Activated CD4-positive, alpha-beta memory T cell treated with anti-CD3 and anti-CD28 coated beads for 36 hours (primary cell): ENCODE measurements at regions of chr10 and their contacts with region 1.

Region 1: DNA sequence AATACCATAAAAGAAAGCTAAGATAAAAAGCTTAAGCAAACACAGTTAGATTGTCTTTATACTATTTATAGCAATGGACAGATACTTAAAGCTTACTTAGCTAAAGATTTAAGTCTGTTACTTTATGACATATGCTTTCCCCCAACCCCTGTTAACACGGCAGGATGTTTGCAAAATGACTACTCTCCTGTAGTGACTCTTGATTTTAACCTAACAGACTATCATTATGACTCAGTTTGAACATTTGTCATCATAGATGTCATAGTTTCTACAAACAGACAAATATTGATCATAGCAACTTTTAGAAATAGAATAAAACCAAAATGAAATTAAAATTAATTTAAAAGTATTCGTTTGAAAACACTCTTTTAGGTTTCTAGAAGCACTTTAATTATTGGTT is 7.8 kb upstream of the COMMD3 start:
- DNase-seq: peak; percentile 53
- H3K4me3 Mint-ChIP-seq: no peak overlapping the region
- H3K27ac Mint-ChIP-seq: no peak overlapping the region
- H3K4me1 Mint-ChIP-seq: peaks cover 8% of the 10 kb centered on the region
- H3K27me3 Mint-ChIP-seq: no peaks in the 10 kb centered on the region

Region 2: DNA sequence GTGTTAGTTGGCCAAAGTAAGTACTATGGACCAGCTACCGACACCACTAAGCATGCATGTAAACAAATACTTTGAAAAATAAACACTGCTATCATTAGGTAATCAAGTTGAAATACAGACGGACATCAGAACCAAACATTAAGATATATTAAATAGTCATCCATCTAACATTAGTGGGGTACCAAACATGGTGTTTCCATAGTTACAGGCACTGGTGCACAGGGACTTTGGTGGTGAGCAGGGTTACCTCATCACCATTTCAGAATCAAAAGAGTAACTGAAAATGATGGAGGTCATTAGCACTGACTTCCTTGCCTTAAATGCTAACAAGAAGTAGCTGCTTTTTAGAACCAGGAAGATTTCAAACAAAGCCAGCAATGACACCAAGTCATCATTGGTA is 114.4 kb before region 1 on chr10:
- CTCF ChIA-PET with region 1: no interaction called
- POLR2A ChIA-PET with region 1: no interaction called
- intact Hi-C with region 1: no loop called
- DNase-seq: no peak
- H3K4me3 Mint-ChIP-seq: no peak overlapping the region
- H3K27ac Mint-ChIP-seq: no peak overlapping the region
- H3K4me1 Mint-ChIP-seq: no peaks in the 10 kb centered on the region
- H3K27me3 Mint-ChIP-seq: peaks cover 3% of the 10 kb centered on the region

Region 3: DNA sequence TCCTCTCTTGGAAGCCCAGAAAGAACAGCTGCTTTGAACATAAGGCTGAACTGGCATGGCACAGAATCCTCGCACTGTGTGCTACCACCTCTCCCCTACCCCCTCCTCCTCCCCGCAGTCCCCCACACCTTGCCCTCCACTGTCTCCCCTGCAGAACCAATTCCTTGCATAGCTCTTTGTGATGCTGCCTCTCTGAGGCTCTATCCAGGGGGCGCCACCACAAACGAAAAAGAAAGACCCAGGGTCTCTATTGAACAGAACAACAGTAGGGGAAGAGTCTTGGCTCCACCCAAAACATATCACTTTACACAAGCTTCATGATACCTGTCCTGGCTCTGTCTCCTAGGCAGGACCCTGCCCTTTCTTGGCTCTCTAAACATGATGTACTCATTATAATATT is 64.4 kb before region 1 on chr10:
- CTCF ChIA-PET with region 1: no interaction called
- POLR2A ChIA-PET with region 1: no interaction called
- intact Hi-C with region 1: loop called (anchors 1 kb)
- DNase-seq: peak; percentile 17
- H3K4me3 Mint-ChIP-seq: no peak overlapping the region
- H3K27ac Mint-ChIP-seq: no peak overlapping the region
- H3K4me1 Mint-ChIP-seq: peaks cover 39% of the 10 kb centered on the region
- H3K27me3 Mint-ChIP-seq: peaks cover 4% of the 10 kb centered on the region

Region 4: DNA sequence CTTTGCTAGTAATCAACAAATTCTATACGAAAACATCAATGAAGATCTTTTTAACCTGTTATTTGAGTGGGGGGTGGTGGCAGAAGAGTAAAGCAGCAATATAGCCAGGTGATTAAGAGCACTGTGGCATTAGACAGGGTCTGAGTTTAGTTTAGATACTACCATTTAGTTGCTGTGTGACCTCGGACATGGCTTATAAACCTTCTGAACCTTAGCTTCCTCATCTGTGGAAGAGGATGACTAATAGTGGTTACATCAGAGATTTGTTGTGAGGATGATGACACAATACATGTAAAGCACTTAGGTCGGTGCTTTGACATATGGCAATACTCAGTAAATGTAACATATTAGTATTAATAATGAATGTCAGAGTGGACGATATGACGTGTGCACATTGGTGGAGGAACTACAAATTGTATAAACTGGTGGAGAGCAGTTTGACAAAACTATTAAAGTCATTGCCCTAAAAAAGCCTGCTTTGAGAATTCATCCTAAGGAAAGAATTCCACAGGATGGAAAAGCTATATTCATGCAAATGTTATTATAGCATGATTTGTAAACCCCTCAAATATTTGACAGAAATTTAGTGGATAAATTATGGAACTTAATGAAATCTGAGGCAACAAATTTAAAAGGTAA is 61.2 kb after region 1 on chr10:
- CTCF ChIA-PET with region 1: no interaction called
- POLR2A ChIA-PET with region 1: no interaction called
- intact Hi-C with region 1: loop called (anchors 2 kb)
- DNase-seq: no peak
- H3K4me3 Mint-ChIP-seq: no peak overlapping the region
- H3K27ac Mint-ChIP-seq: no peak overlapping the region
- H3K4me1 Mint-ChIP-seq: peaks cover 19% of the 10 kb centered on the region
- H3K27me3 Mint-ChIP-seq: peaks cover 4% of the 10 kb centered on the region

Region 5: DNA sequence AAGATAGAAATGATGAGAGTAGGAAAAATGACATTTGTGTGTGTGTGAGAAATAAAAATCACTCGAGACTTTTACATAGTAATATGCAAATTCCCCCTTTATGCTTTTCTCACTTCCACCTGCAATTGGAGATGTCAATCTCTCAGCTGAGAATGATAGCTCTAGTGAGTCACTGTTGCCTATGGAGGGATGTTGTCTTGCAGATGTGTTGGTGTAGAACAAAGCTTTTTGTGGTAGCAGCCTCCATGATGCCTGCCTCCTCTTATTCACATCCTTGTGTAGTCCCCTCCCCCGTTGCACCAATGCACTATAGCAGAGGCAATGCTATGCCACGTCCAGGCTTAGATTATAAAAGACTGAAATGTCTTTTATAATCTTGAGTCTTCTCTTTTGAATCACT is 70.7 kb after region 1 on chr10:
- CTCF ChIA-PET with region 1: no interaction called
- POLR2A ChIA-PET with region 1: no interaction called
- intact Hi-C with region 1: loop called (anchors 2 kb)
- DNase-seq: peak; percentile 70
- H3K4me3 Mint-ChIP-seq: no peak overlapping the region
- H3K27ac Mint-ChIP-seq: peak overlapping the region; percentile 53
- H3K4me1 Mint-ChIP-seq: peaks cover 12% of the 10 kb centered on the region
- H3K27me3 Mint-ChIP-seq: no peaks in the 10 kb centered on the region